Activated naive CD4-positive, alpha-beta T cell treated with anti-CD3 and anti-CD28 coated beads for 36 hours (primary cell): ENCODE measurements at regions of chr11 and their contacts with region 1.

Region 1: DNA sequence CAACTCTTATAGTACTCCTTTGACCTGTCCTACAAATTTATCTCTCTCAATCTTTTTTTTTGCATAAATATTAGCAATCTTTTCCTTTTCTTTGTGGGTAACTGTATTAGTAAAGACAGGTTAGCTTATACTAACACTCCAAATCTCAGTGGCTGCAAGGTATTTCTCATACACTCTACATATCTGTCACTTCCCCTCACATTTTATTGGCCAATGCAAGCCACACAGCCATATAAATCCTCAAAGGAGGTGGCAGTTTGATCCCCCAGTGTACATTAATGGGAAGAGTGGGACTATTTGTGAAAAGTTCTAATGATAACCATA is 42.6 kb upstream of the EED start:
- DNase-seq: peak; percentile 42
- H3K4me3 Mint-ChIP-seq: no peak overlapping the region
- H3K27ac Mint-ChIP-seq: no peak overlapping the region
- H3K4me1 Mint-ChIP-seq: no peaks in the 10 kb centered on the region
- H3K27me3 Mint-ChIP-seq: no peaks in the 10 kb centered on the region

Region 2: DNA sequence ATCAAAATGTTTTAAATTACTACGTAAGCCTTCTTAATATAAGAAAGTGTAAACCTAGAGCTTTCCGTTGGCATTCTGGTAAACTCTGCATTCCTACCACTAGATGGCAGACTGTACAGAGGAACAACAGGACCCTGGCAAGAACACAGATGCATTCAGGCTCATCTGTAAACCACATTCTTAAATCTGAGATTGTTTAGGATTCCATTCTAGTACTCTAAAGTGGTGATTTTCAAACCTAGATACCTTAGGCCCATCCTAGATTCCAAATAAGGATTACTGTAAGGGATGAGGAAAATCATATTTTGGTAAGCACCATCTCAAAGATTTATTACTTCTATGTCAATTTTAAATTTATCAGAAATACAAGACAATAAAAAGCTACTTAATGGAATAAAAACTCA is 160.0 kb before region 1 on chr11:
- CTCF ChIA-PET with region 1: interaction called, 14 read pairs
- intact Hi-C with region 1: loop called (anchors 1 kb)
- DNase-seq: peak; percentile 77
- H3K4me3 Mint-ChIP-seq: no peak overlapping the region
- H3K27ac Mint-ChIP-seq: peak overlapping the region; percentile 73
- H3K4me1 Mint-ChIP-seq: peaks cover 69% of the 10 kb centered on the region
- H3K27me3 Mint-ChIP-seq: no peaks in the 10 kb centered on the region

Region 3: DNA sequence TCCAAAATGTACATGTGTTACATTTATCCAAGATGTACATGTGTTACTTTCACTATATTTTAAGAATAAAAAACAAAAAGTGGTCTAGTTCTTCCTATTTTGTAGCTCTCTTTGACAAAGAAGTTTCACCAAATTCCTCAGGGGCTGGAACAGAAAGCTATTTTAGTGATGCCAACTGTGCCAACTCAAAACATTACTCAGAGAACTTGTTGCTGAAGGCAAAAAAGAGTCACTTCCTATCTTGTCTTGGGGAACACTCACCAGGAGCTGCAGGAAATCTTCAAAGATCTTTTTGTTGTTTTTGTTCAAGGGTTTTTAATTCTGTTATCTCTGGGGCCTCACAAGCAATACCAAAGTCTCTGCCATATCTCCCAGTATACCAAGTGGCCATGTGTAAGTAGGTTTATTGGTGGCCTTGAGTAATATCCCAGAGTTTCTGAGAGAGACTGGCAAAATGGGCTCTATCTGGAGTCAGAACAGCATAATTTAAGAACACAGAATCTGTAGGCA is 29.0 kb after region 1 on chr11:
- CTCF ChIA-PET with region 1: interaction called, 4 read pairs
- intact Hi-C with region 1: loop called (anchors 1 kb)
- DNase-seq: no peak
- H3K4me3 Mint-ChIP-seq: no peak overlapping the region
- H3K27ac Mint-ChIP-seq: peak overlapping the region; percentile 15
- H3K4me1 Mint-ChIP-seq: peaks cover 62% of the 10 kb centered on the region
- H3K27me3 Mint-ChIP-seq: no peaks in the 10 kb centered on the region